Activated B cell treated with CpG ODN at 0.5 μM for 24 hours (primary cell): ENCODE measurements at regions of chr13 and their contacts with region 1.

Region 1: DNA sequence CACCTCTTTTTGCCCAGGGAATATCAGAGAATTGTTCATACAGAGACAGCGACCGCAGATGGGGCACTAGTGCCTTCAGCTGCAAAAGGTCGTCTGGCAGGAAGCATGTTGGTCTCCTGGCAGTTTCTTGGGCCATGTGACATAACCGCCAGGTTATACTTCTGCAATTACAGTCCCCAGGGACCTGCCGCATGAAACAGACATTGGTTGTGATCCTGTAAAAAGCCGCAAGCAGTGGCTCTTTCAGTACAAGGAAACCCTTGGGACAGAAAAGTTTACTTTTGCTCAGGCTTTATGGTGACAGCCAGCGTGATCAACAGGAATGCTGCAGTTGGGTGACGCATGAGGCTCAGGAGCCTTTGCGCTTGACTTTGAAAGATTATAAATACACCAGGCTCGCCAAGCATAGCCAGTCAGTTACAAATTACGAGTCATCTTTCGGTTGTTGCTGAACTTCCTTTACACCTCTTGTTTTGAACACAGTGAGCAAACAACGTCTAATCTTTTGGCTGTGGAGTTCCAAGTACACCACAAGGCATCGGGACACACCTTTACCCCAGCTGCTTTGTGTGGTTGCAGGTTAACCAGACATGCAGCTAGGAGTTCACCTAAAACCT is 50.5 kb upstream of the UBE2L5 start:
- DNase-seq: peak; percentile 68
- ATAC-seq: peak; percentile 78
- H3K4me3 Mint-ChIP-seq: peak overlapping the region; percentile 78
- H3K27ac Mint-ChIP-seq: peak overlapping the region; percentile 84
- H3K4me1 Mint-ChIP-seq: peaks cover 85% of the 10 kb centered on the region
- H3K27me3 Mint-ChIP-seq: no peaks in the 10 kb centered on the region
- CTCF ChIP-seq: no peak

Region 2: DNA sequence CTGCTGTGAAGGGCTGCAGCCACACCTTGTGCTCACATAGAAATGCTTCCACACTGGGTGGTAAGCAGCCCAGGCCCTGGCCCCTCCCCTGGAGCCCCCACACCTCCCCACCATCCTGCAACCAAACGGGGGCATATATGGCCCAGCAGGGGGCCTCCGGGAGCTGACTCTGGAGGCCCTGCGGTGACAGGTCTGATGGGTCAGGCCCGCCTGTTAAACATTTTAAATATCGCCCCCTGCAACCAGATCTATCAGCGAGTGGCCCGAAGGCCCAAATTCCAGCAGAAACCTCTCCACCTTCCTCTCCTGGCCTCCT is 16.4 kb before region 1 on chr13:
- CTCF ChIA-PET with region 1: interaction called, 11 read pairs
- POLR2A ChIA-PET with region 1: interaction called, 17 read pairs
- intact Hi-C with region 1: loop called (anchors 1 kb)
- DNase-seq: peak; percentile 61
- ATAC-seq: peak; percentile 100
- H3K4me3 Mint-ChIP-seq: peak overlapping the region; percentile 45
- H3K27ac Mint-ChIP-seq: peak overlapping the region; percentile 77
- H3K4me1 Mint-ChIP-seq: peaks cover 32% of the 10 kb centered on the region
- H3K27me3 Mint-ChIP-seq: no peaks in the 10 kb centered on the region
- CTCF ChIP-seq: no peak

Region 3: GRCh38 chr13:30395192-30396084 is 23.7 kb after region 1 on chr13:
- CTCF ChIA-PET with region 1: interaction called, 12 read pairs
- POLR2A ChIA-PET with region 1: interaction called, 199 read pairs
- intact Hi-C with region 1: loop called (anchors 1 kb)
- DNase-seq: peak; percentile 52
- ATAC-seq: peak; percentile 78
- H3K4me3 Mint-ChIP-seq: peak overlapping the region; percentile 97
- H3K27ac Mint-ChIP-seq: peak overlapping the region; percentile 91
- H3K4me1 Mint-ChIP-seq: peaks cover 29% of the 10 kb centered on the region
- H3K27me3 Mint-ChIP-seq: no peaks in the 10 kb centered on the region
- CTCF ChIP-seq: no peak

Region 4: GRCh38 chr13:30415430-30416030 is 43.8 kb after region 1 on chr13:
- CTCF ChIA-PET with region 1: interaction called, 7 read pairs
- POLR2A ChIA-PET with region 1: interaction called, 18 read pairs
- intact Hi-C with region 1: loop called (anchors 2 kb)
- DNase-seq: no peak
- ATAC-seq: peak; percentile 77
- H3K4me3 Mint-ChIP-seq: peak overlapping the region; percentile 61
- H3K27ac Mint-ChIP-seq: peak overlapping the region; percentile 86
- H3K4me1 Mint-ChIP-seq: peaks cover 78% of the 10 kb centered on the region
- H3K27me3 Mint-ChIP-seq: no peaks in the 10 kb centered on the region
- CTCF ChIP-seq: no peak

Region 5: DNA sequence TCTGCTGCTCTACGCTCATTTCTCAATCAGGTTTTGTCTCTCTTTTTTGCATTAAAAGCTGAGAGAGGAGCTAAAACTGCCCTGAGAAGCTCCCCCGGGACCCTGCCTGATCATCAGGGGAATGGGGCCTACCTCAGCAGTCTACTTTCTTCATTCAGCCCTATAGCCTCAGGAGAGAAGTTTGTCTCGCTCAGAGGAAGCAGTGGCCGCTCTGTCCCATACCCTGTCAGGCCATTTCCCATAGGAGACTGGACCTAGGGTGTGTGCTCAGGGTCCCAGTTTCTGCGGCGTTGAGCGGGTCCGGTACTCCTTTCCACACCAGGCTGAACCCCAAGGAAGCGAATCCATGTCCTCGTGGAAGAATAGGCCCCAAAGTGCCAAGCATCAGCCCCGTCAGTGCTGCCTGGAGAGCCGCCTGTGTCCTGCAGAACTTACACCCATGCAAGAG is 72.2 kb after region 1 on chr13:
- CTCF ChIA-PET with region 1: interaction called, 3 read pairs
- POLR2A ChIA-PET with region 1: interaction called, 101 read pairs
- intact Hi-C with region 1: loop called (anchors 1 kb)
- DNase-seq: peak; percentile 76
- ATAC-seq: peak; percentile 88
- H3K4me3 Mint-ChIP-seq: peak overlapping the region; percentile 79
- H3K27ac Mint-ChIP-seq: peak overlapping the region; percentile 97
- H3K4me1 Mint-ChIP-seq: peaks cover 72% of the 10 kb centered on the region
- H3K27me3 Mint-ChIP-seq: no peaks in the 10 kb centered on the region
- CTCF ChIP-seq: no peak

Region 6: DNA sequence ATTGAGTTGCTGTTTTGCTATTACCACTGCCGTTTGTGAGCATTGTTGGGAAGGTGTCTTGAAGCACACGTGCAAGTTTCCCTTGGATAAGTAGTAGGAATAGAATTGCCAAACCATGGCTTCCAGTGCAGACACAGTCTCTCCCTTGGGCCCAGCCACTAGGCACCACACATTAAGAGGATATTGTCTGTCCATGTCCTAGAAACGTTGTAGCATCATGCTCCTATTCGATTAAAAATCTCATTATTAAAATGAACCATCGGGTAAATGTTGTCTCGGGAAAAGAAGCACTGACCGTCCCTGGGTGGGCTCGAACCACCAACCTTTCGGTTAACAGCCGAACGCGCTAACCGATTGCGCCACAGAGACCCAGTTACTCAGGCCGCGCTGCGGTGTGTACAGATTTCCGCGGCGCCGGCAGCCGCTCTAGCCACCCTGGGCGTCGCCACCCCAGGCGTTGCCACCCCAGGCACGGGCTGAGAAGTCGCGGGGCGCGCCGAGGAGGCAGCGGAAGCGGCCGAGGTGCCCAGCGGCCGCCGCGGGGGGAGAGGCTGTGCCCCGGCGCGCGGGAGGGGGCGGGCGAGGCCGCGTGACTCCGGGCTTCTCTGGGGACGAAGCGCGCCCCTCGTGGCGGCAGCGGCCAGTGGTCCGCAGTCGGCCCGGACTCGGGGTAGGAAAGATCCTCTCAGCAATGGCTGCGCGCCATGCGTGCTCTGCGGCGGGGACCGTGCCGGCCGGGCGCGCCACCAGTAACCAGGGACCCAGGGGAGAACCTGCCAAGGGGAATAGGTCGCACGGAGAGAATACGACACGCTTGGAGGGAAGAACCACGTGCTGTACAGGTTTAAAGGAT is 302.1 kb after region 1 on chr13:
- CTCF ChIA-PET with region 1: no interaction called
- POLR2A ChIA-PET with region 1: no interaction called
- intact Hi-C with region 1: loop called (anchors 1 kb)
- DNase-seq: peak; percentile 94
- ATAC-seq: peak; percentile 93
- H3K4me3 Mint-ChIP-seq: peak overlapping the region; percentile 92
- H3K27ac Mint-ChIP-seq: peak overlapping the region; percentile 92
- H3K4me1 Mint-ChIP-seq: peaks cover 29% of the 10 kb centered on the region
- H3K27me3 Mint-ChIP-seq: no peaks in the 10 kb centered on the region
- CTCF ChIP-seq: no peak